Thyroid gland (tissue), 4 donors: ENCODE measurements at regions of chr3 and their contacts with region 1.

Region 1: GRCh38 chr3:107740992-107741896 is 218.5 kb downstream of the BBX start:
- DNase-seq: no peak
- H3K4me3 ChIP-seq: no peak overlapping the region
- H3K27ac ChIP-seq: no peak overlapping the region
- H3K4me1 ChIP-seq: peaks cover 0 to 6% of the 10 kb centered on the region in 2 donors
- H3K27me3 ChIP-seq: no peaks in the 10 kb centered on the region
- CTCF ChIP-seq: peak in 4 of 6 experiments; percentile 16 to 66 (median 58)
- POLR2A ChIP-seq: no peak

Region 2: DNA sequence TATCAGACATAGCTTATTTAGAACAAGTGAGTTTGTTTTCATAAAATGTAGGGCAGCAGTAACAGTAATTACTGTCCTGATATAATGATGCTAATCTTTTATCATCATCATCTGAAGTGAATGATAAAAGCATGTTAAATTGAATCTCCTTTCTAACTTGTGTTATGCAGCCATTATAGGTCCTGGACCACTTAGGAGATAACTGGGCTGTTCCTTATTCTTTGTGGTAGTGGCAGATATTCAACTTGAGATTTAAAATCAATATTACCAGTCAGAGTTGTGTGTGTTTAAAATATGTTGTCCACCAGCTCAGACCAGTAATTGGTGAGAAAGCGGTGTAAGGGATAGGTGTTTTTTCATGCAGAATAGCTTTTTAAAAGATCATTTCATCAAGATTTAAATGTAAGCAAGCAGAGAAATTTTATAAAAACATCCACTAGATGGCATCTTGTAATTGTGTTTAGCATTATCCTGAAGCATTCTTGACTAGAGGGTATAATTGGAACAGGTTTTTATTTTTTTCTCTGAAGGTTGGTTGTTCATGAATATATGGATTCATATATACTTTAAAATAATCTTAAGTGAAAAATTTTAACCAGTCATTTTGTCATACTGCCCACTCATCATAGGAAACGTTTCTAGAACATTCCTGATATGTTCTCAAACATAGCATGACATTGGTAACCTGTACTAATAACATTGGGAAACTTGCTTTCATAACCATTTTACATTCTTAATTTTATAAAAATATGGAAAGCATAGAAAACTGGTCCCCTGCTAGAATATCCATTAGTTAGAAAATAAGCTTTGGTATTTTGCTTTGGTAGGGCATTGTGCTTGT is 64.6 kb before region 1 on chr3:
- intact Hi-C with region 1: loop called (anchors 10 kb)
- DNase-seq: no peak
- H3K4me3 ChIP-seq: no peak overlapping the region
- H3K27ac ChIP-seq: no peak overlapping the region
- H3K4me1 ChIP-seq: no peaks in the 10 kb centered on the region
- H3K27me3 ChIP-seq: no peaks in the 10 kb centered on the region
- CTCF ChIP-seq: peak in 4 of 6 experiments; percentile 39 to 68 (median 57)
- POLR2A ChIP-seq: no peak